ENCODE measurements at regions of chr7 and their contacts with region 1.

Region 1: GRCh38 chr7:140876519-140877248 is 48.0 kb downstream of the BRAF start:
- DNase-seq: peak in 2 of 9 experiments; percentile 13 to 34
- ATAC-seq: no peak
- H3K4me3 ChIP-seq: no peak overlapping the region
- H3K4me3 Mint-ChIP-seq: no peak overlapping the region
- H3K27ac ChIP-seq: no peak overlapping the region
- H3K27ac Mint-ChIP-seq: no peak overlapping the region
- H3K4me1 ChIP-seq: peaks cover 8% of the 10 kb centered on the region
- H3K4me1 Mint-ChIP-seq: peaks cover 62% of the 10 kb centered on the region
- H3K27me3 ChIP-seq: no peaks in the 10 kb centered on the region
- H3K27me3 Mint-ChIP-seq: no peaks in the 10 kb centered on the region
- CTCF ChIP-seq: no peak

Region 2: DNA sequence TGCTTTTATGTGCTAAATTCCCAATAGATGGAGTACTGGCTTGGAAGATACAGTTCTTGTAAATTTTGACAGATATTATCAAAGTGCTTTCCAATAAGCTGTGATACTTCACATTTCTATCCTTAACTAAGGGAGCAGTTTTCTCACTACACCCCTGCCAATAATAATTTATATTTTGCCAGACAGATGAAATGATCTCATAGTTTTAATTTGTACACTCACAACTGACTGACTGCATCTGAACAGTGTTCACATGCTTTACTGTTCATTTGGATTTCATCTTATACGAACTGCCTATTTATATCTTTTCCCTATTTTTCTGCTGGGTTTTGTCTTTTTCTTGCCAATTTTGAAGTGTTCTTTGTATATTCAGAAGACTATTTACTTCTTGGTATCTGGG is 47.9 kb before region 1 on chr7:
- CTCF ChIA-PET with region 1: no interaction called
- POLR2A ChIA-PET with region 1: no interaction called
- intact Hi-C with region 1: loop called in 1 of 2 experiments (anchors 10 kb)
- DNase-seq: no peak
- ATAC-seq: no peak
- H3K4me3 ChIP-seq: no peak overlapping the region
- H3K4me3 Mint-ChIP-seq: no peak overlapping the region
- H3K27ac ChIP-seq: no peak overlapping the region
- H3K27ac Mint-ChIP-seq: no peak overlapping the region
- H3K4me1 ChIP-seq: no peaks in the 10 kb centered on the region
- H3K4me1 Mint-ChIP-seq: no peaks in the 10 kb centered on the region
- H3K27me3 ChIP-seq: no peaks in the 10 kb centered on the region
- H3K27me3 Mint-ChIP-seq: no peaks in the 10 kb centered on the region
- CTCF ChIP-seq: no peak

Region 3: DNA sequence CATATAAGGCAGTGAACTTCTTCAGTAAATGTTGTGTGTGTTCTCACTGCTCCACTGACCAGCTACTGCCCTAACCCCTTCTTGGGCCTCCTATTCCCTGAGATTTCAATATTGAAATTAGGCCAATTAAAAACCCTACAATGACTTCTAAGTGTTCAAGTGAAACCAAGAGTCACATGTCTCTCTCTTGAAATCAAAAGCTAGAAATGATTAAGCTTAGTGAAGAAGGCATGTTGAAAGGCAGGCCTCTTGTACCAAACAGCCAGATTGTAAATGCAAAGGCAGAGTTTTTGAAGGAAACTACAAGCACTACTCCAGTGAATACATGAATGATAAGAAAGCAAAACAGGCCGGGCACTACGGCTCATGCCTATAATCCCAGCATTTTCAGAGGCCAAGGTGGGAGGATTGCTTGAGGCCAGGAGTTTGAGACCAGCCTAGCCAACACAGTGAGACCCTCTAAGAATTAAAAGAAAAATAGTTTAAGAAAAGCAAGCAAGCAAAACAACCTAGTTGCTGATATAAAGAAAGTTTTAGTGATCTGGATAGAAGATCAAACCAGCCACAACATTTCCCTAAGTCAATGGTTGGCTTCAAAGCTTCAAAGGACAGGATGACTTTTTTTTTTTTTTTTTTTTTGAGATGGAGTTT is 25.7 kb after region 1 on chr7:
- CTCF ChIA-PET with region 1: no interaction called
- POLR2A ChIA-PET with region 1: no interaction called
- intact Hi-C with region 1: no loop called
- DNase-seq: peak in 2 of 9 experiments; percentile 28 to 57
- ATAC-seq: peak; percentile 52
- H3K4me3 ChIP-seq: peak overlapping the region in 1 of 2 experiments; percentile 22
- H3K4me3 Mint-ChIP-seq: peak overlapping the region; percentile 54
- H3K27ac ChIP-seq: peak overlapping the region; percentile 12 to 31
- H3K27ac Mint-ChIP-seq: peak overlapping the region; percentile 78
- H3K4me1 ChIP-seq: peaks cover 22% of the 10 kb centered on the region
- H3K4me1 Mint-ChIP-seq: peaks cover 73% of the 10 kb centered on the region
- H3K27me3 ChIP-seq: no peaks in the 10 kb centered on the region
- H3K27me3 Mint-ChIP-seq: no peaks in the 10 kb centered on the region
- CTCF ChIP-seq: no peak

Region 4: DNA sequence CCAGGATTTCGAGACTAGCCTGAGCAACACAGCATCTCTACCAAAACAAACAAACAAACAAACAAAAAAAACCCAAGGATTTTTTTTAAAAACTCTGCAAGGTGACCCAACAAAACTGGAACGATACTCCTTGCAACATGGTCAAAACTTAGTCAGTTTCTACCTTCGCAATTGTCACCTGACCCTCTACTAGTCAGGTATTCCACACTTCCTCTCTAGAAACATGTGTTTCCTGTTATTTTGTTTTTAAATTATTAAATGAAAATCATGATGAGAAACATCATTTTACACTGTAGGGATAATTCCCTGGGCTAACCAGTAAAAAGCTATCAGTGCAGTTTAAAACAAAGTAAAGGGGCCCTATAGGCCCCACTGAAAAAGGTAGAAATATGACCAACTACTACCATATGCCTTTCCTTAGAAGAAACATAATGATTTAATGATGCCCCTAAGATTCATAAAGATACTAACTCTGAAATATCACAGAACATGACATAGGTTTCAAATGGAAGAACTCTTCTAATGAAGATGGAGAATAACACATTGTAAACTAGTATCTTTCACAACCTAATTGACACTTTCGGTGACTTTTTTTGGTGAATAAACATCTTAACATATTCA is 39.4 kb after region 1 on chr7:
- CTCF ChIA-PET with region 1: no interaction called
- POLR2A ChIA-PET with region 1: no interaction called
- intact Hi-C with region 1: loop called in 1 of 2 experiments (anchors 5 kb)
- DNase-seq: no peak
- ATAC-seq: no peak
- H3K4me3 ChIP-seq: no peak overlapping the region
- H3K4me3 Mint-ChIP-seq: no peak overlapping the region
- H3K27ac ChIP-seq: no peak overlapping the region
- H3K27ac Mint-ChIP-seq: no peak overlapping the region
- H3K4me1 ChIP-seq: peaks cover 12% of the 10 kb centered on the region
- H3K4me1 Mint-ChIP-seq: peaks cover 70% of the 10 kb centered on the region
- H3K27me3 ChIP-seq: no peaks in the 10 kb centered on the region
- H3K27me3 Mint-ChIP-seq: no peaks in the 10 kb centered on the region
- CTCF ChIP-seq: no peak

Measured in CD8-positive, alpha-beta T cell (primary cell).